HepG2 (cell line): ENCODE measurements at regions of chr10 and their contacts with region 1.

Region 1: DNA sequence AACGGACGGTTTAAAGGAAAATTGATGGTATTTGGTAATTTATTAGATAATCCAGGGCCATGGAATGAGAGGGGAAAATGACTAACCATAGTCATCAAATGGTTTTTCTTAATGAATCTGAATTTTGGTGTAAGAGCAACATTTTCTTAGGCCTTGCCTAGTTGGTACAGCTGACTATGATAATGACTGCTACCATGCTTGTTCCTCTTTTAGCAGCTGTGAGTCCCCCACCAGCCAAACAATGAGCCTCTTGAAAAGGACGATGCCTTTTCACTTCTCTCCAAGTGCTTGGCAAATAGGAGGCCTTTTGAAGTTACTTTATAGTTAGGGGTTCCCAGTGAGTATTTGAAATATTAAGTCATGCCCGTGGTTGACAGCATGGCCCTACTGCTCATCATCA is 53.0 kb downstream of the TRUB1 start:
- DNase-seq: no peak
- ATAC-seq: no peak
- H3K4me3 ChIP-seq: no peak overlapping the region
- H3K27ac ChIP-seq: no peak overlapping the region
- H3K4me1 ChIP-seq: no peaks in the 10 kb centered on the region
- H3K27me3 ChIP-seq: no peaks in the 10 kb centered on the region
- CTCF ChIP-seq: no peak
- EP300 ChIP-seq: no peak
- POLR2A ChIP-seq: no peak
- RAD21 ChIP-seq: no peak

Region 2: DNA sequence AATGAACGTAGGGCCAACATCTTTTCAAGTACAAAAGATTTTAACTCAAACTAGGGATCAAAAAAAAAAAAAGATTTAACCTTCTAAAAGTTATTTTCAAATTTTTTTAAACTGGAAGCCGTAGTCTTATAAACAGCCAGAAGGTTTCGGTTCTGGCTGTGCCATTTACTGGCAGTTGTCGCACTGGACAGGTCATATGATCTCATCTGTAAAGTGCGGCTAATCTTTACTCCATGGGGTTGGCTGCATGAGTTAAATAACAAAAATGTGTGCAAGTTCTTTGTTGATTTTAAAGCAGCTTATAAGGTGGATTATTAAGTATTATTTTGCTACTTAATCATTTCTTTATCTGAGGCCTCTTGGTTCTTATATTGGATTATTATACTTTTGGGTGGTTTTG is 16.4 kb before region 1 on chr10:
- CTCF ChIA-PET with region 1: no interaction called
- POLR2A ChIA-PET with region 1: no interaction called
- in situ Hi-C with region 1: no loop called
- intact Hi-C with region 1: loop called (anchors 2 kb)
- DNase-seq: no peak
- ATAC-seq: no peak
- H3K4me3 ChIP-seq: no peak overlapping the region
- H3K27ac ChIP-seq: no peak overlapping the region
- H3K4me1 ChIP-seq: no peaks in the 10 kb centered on the region
- H3K27me3 ChIP-seq: no peaks in the 10 kb centered on the region
- CTCF ChIP-seq: no peak
- EP300 ChIP-seq: no peak
- POLR2A ChIP-seq: no peak
- RAD21 ChIP-seq: no peak

Region 3: GRCh38 chr10:115239761-115240160 is 248.8 kb after region 1 on chr10:
- CTCF ChIA-PET with region 1: no interaction called
- POLR2A ChIA-PET with region 1: no interaction called
- in situ Hi-C with region 1: no loop called
- intact Hi-C with region 1: no loop called
- DNase-seq: no peak
- ATAC-seq: no peak
- H3K4me3 ChIP-seq: no peak overlapping the region
- H3K27ac ChIP-seq: no peak overlapping the region
- H3K4me1 ChIP-seq: no peaks in the 10 kb centered on the region
- H3K27me3 ChIP-seq: no peaks in the 10 kb centered on the region
- CTCF ChIP-seq: no peak
- EP300 ChIP-seq: no peak
- POLR2A ChIP-seq: no peak
- RAD21 ChIP-seq: no peak